ENCODE measurements at regions of chr3 and their contacts with region 1.

Region 1: DNA sequence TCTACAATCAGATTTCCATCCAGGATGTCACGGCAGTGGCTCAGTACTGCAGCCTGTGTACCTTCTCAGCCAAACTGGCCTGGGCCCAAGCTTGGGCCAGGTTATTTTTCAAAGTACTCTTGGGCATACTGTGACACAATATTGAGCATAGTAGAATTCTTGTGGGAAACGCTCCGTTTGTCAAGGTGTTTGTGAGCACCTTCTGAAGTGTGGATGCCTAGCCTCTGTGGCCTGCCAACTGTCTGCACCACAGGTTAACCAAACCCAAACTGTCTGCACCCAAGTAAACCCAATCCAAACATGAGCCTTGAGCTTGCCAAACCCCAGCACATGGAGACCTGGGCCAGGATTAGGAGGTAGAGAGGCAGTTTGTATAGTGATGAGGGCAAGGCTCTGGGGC is 25.4 kb downstream of the CTDSPL start:
- DNase-seq: peak; percentile 87

Region 2: DNA sequence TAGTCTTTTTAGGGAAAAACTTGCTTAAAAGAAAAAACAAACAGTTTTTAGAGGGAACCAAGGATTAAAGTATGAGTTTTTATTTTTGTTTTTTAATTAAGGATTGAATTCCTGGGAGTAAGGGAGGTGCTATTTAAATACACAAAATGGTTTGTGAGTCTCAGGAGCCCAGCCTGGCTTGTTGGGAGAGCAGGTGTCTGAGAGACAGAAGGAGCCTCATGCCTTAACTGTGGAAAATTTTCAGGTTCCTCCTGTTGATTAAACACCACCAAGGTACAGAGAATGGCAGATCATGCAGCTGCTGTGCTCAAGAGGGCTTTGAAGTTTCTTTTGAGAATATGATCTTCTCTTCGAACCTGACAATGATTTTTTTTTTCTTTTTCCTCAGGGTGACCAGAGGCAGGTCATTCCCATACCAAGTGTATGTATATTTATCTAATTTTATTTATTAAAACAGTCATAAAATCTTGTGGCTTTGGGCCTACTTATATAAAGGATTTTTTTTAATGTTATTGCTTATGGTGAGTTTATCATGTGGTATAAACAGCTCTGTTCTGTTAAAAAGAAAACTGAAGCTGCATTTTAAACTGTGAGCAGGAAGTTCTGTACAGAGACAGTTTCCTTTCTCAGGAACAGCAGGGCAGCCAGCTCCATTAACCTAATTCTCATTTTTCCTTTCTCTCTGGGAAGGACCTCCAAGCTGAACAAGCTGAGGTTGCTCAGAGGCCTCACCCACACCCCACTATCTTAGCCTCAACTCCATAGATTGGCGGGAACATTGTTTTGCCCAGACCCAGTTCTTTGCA is 69.9 kb after region 1 on chr3:
- in situ Hi-C with region 1: loop called (anchors 5 kb)
- DNase-seq: peak; percentile 60

Measured in G401 (cell line).